ENCODE measurements at regions of chr12 and their contacts with region 1.

Region 1: DNA sequence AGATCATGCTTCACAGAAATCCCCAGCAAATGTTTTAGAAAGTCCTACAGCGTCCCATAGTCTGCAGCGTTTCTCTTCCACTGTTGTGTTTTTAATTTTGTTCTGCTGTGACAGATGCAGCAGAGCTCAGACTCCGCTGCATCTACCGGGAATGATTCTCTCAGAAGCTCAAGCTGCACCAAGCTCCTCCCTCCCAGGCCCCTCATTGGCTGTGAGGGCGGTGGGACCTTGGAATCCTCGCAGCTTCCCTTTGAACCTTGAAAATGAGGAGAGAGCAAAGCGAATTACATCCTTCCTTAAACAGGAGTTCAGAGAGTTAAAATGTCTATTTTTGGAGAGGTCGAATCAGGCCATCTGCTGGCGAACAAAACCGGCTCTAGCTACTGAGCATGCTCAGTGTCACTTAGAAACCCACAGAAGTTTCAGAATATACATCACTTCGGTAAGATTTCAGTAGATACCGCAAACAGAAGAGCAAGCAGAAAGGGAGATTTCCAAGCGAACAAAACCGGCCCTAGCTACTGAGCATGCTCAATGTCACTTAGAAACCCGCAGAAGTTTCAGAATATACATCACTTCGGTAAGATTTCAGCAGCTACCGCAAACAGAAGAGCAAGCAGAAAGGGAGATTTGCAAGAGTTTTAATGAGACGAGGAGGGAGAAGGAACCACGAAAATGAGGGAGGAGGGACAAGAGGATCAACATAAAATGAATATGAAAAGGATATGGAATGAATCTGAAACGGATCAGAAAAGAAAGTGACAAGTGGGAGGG is at the start of gene ABCD2:
- DNase-seq: peak; percentile 78
- H3K4me3 Mint-ChIP-seq: no peak within 1 kb of the TSS
- H3K27ac Mint-ChIP-seq: no peak within 1 kb of the TSS
- H3K4me1 Mint-ChIP-seq: peaks cover 38% of the 10 kb centered on the region
- H3K27me3 Mint-ChIP-seq: no peaks in the 10 kb centered on the region
- total RNA-seq, gene ABCD2: 7.8 and 8.0 TPM in 2 replicates

Region 2: DNA sequence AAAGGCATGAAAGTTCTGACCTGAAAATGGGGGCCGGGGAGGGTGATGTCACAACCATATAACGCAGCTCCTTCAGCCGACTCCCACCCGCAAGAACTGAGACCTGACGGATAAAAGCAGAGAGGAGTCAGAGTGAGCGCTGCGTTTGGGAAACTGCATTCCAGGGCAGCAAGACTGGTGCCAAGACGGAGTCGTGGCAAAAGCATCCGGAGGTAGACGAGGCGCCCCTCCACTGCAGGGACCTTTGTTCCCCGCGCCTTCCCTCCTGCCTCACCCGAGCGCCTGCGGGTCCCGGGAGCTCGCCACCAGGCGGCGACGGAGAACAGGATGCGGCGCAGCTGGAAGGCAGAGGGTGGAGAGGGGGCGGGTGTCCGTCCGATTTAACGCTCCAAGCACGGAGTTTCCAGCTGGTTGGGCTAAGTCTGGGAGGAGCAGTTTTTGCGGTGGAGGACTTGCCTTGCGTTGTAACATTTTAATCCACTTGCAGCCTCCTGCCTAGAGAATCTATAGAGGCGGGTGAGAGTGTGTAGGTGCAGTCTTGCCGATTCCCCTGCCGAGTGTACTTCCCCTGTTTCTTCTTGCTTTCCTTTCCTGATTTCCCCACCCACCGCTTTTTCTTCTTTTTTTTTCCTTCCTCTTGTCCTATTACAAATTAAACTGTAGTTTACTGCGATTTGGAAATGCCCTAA is 713.2 kb before region 1 on chr12:
- intact Hi-C with region 1: loop called (anchors 5 kb)
- DNase-seq: peak; percentile 64
- H3K4me3 Mint-ChIP-seq: peak overlapping the region; percentile 88
- H3K27ac Mint-ChIP-seq: peak overlapping the region; percentile 84
- H3K4me1 Mint-ChIP-seq: peaks cover 32% of the 10 kb centered on the region
- H3K27me3 Mint-ChIP-seq: peaks cover 18% of the 10 kb centered on the region

Region 3: DNA sequence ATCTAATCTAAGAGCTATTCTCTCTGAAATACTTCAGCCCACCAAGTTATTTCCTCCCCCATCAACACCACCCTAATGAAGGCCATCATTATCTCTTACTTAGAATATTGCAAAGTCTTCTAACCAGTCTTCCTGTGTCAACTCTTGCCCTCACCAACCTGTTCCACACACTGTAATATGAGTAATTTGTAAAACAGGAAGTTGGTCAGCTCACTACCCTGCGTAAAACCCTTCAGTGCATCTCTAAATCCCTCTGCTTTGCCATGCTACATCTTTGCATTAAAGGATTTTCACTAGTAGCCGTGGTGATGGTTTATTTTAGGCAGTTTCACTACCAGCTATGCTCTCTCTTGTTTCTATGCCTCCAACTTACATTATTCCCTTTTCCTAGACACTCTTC is 246.9 kb before region 1 on chr12:
- intact Hi-C with region 1: loop called (anchors 2 kb)
- DNase-seq: peak; percentile 9
- H3K4me3 Mint-ChIP-seq: peak overlapping the region; percentile 0
- H3K27ac Mint-ChIP-seq: peak overlapping the region; percentile 70
- H3K4me1 Mint-ChIP-seq: peaks cover 28% of the 10 kb centered on the region
- H3K27me3 Mint-ChIP-seq: no peaks in the 10 kb centered on the region

Region 4: DNA sequence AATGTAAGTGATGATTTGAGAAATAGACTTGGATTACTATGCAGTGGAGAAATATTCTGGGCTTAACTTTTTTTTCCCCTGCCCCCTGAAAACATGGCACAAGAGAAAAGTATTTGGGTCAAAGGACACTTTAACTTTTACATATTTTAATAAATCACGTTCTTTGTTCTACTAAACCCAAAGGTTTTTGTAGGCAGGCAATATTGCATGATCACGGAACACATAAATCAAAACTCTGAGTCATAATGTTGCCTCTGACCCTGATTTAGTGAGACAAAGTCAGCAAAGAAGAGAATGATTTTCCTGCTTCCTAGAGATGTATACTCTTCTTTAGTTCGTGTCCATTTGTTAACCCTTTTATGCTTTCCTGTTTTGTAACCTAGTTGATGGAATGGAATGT is 38.3 kb before region 1 on chr12:
- intact Hi-C with region 1: loop called (anchors 5 kb)
- DNase-seq: no peak
- H3K4me3 Mint-ChIP-seq: no peak overlapping the region
- H3K27ac Mint-ChIP-seq: no peak overlapping the region
- H3K4me1 Mint-ChIP-seq: no peaks in the 10 kb centered on the region
- H3K27me3 Mint-ChIP-seq: no peaks in the 10 kb centered on the region

Region 5: GRCh38 chr12:39682689-39683477 is 63.0 kb after region 1 on chr12:
- intact Hi-C with region 1: loop called (anchors 1 kb)
- DNase-seq: no peak
- H3K4me3 Mint-ChIP-seq: peak overlapping the region; percentile 72
- H3K27ac Mint-ChIP-seq: peak overlapping the region; percentile 64
- H3K4me1 Mint-ChIP-seq: peaks cover 52% of the 10 kb centered on the region
- H3K27me3 Mint-ChIP-seq: no peaks in the 10 kb centered on the region

Region 6: GRCh38 chr12:40107098-40107802 is 487.4 kb after region 1 on chr12:
- intact Hi-C with region 1: loop called (anchors 2 kb)
- DNase-seq: peak; percentile 69
- H3K4me3 Mint-ChIP-seq: peak overlapping the region; percentile 80
- H3K27ac Mint-ChIP-seq: peak overlapping the region; percentile 26
- H3K4me1 Mint-ChIP-seq: peaks cover 30% of the 10 kb centered on the region
- H3K27me3 Mint-ChIP-seq: peaks cover 47% of the 10 kb centered on the region

Region 7: DNA sequence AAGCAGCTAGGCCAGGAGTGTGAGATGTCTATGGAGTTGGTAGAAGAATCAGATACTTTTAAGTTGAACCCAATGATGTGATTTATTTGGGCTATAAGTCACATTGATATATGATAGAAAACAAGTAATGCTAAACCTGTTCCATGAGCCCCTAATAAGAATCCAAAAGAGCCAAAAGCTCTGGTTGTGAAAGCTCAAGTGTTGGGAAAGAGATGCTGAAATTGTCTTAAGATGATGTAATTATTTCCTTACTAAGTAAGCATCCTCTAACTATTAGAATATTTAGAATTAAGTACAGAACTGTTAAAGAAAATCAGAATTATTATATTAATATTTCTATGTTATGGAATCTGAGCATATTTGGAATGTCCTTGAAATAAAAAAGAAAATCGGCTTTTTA is 503.6 kb after region 1 on chr12:
- intact Hi-C with region 1: no loop called
- DNase-seq: no peak
- H3K4me3 Mint-ChIP-seq: no peak overlapping the region
- H3K27ac Mint-ChIP-seq: no peak overlapping the region
- H3K4me1 Mint-ChIP-seq: no peaks in the 10 kb centered on the region
- H3K27me3 Mint-ChIP-seq: peaks cover 20% of the 10 kb centered on the region